Heart right ventricle (tissue), 16 donors: ENCODE measurements at regions of chr11 and their contacts with region 1.

Region 1: GRCh38 chr11:76629853-76630599 is 40.5 kb downstream of the LRRC32 start:
- DNase-seq: peak; percentile 74 to 87
- ATAC-seq: peak; percentile 77 to 91 (median 86)
- H3K4me3 ChIP-seq: peak overlapping the region in 4 of 10 donors; percentile 5 to 18 (median 12)
- H3K27ac ChIP-seq: peak overlapping the region; percentile 64 to 98 (median 92)
- H3K4me1 ChIP-seq: peaks cover 17 to 60% (median 29%) of the 10 kb centered on the region in 9 donors
- H3K27me3 ChIP-seq: no peaks in the 10 kb centered on the region
- CTCF ChIP-seq: peak in 6 of 9 donors; percentile 10 to 50 (median 36)

Region 2: DNA sequence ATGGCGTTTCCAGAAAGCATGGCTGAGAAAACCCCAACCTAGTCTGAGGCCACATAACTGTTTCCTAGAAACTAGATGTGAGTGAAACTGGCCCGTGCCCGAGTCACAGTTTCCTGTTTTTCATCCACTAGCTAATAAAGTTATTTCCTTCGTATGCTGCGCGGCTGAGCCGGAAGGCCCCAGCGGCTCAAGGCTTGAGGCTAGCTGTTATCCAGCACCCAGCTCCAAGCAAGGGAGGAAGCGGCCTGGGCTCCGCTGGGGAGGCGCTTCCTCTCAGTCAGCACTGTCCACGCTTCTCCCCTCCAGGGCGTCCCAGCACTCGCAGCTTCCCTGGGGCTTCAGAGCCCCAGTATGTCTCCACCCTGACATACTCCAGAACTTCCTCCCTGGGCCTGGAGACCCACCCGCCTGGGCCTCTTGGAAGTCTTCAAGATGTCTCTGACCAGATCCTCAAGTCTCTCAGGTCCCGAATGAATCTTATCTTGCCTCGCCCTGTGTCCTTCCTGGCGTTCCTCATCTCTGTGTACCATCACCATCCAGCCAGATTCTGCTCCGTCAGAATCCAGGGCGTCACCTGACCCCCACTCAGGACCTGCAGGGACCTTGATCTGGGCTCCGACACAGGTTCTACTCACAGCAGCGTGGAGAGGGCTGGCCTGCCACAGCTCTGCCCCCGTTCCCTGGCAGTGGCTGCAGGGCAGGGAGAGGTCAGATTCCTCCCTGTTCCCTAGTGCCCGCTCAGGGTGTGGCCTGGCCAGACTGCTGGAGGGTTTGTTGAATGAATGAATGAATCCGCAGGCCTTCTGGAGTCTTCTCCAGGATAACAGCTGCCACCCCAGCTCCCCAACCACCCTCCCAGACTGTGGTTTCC is 41.3 kb before region 1 on chr11:
- intact Hi-C with region 1: loop called in 1 of 10 experiments (anchors 5 kb)
- DNase-seq: peak; percentile 77 to 84
- ATAC-seq: peak; percentile 90 to 97 (median 96)
- H3K4me3 ChIP-seq: no peak overlapping the region
- H3K27ac ChIP-seq: peak overlapping the region; percentile 61 to 89 (median 82)
- H3K4me1 ChIP-seq: peaks cover 6 to 30% (median 20%) of the 10 kb centered on the region in 9 donors
- H3K27me3 ChIP-seq: no peaks in the 10 kb centered on the region
- CTCF ChIP-seq: no peak

Region 3: DNA sequence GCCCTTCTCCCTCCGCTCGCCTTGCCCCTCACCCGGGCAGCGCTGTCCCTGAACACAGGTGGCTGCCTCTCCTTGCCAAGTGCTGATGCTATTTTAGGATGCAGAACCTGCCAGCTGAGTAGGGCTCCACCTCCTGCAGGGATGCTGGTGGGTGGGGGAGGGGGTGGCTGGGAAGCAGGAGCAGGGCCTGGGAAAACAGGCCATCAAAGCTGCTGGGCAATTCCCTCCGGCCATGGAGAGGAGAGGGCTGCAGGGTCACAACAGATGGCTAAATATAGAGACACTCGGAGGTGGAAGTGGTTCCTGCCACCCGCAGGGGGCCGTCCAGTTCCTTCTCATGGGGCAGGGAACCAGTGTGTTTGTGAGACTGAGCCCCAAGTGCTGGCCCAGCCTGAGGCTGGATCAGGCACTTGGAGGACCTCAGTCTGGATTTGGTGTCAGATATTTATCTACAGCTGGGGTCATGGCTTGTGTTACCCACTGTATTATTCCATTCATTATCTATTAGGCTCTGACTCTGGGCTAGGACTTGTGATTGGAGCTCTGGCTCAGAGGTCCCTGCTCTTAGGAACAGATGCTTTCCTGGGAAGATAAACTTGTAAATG is 19.1 kb before region 1 on chr11:
- intact Hi-C with region 1: loop called in 1 of 10 experiments (anchors 2 kb)
- DNase-seq: peak; percentile 58 to 74
- ATAC-seq: peak; percentile 44 to 78 (median 65)
- H3K4me3 ChIP-seq: no peak overlapping the region
- H3K27ac ChIP-seq: peak overlapping the region in 9 of 10 donors; percentile 43 to 78 (median 66)
- H3K4me1 ChIP-seq: peaks cover 28 to 65% (median 45%) of the 10 kb centered on the region in 9 donors
- H3K27me3 ChIP-seq: no peaks in the 10 kb centered on the region
- CTCF ChIP-seq: peak in 6 of 9 donors; percentile 22 to 48 (median 30)